ENCODE measurements at regions of chr4 and their contacts with region 1.

Region 1: DNA sequence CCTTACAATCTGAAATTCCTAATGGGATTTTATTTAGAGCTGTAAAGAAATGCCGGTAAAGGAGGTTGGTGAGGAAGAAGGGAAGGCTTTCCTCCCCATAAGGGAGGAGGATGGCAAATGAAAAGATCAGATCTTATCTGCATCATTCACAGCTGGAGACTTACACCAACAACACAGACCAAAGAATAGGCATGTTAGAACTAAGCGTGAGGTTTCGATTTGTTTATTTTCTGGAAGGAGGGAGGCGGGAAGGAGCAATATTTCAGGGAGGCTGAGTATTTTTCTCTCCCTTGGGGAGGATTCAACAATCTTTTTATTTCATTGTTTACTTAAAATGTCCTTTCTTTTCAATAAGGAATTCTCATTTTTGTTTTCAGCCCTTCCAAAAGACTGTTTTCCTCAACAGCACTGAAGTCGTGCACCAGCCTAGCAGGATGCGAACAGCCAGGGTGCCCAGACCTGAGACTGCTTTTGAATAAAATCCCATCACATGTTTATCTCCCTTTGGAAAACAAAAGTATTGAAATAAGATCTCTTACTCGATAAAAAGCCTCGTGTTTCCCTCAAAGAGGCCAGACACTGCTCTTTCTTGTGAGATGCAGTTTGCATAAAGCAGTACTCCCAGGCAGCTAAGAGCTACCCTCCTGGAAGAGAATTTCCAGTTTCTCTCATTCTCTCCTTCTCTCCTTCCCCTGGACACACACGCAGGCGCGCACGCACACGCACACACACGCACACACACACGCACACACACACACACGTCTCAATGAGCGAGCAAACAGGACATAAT is 236.1 kb downstream of the MGST2 start:
- DNase-seq: no peak
- H3K4me3 ChIP-seq: peak overlapping the region; percentile 35 to 63 (median 38)
- H3K27ac ChIP-seq: peak overlapping the region; percentile 51 to 79
- H3K4me1 ChIP-seq: no peaks in the 10 kb centered on the region
- H3K27me3 ChIP-seq: no peaks in the 10 kb centered on the region
- CTCF ChIP-seq: no peak
- POLR2A ChIP-seq: no peak

Region 2: DNA sequence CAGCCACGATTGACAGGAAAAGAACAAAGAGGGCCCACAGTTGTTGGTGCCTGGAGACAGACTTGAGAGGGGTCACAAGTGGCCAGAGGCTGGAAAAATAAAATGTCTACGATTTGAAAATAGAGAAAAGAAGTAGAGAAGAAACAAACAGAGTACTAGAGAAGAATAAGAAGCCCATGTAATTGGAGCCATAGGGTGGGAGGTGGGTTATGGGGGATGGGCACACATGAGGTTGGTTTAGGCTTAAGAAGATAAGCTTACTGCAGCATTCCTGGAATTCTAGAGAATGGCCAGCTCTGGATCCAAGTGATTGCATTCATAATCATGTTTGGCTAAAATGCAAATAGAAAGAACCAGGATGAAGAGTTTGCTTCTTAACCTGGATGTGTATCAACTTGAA is 41.6 kb after region 1 on chr4:
- intact Hi-C with region 1: no loop called
- DNase-seq: no peak
- H3K4me3 ChIP-seq: no peak overlapping the region
- H3K27ac ChIP-seq: no peak overlapping the region
- H3K4me1 ChIP-seq: no peaks in the 10 kb centered on the region
- H3K27me3 ChIP-seq: no peaks in the 10 kb centered on the region
- CTCF ChIP-seq: no peak
- POLR2A ChIP-seq: no peak

Region 3: GRCh38 chr4:139963708-139964107 is 62.0 kb after region 1 on chr4:
- intact Hi-C with region 1: no loop called
- DNase-seq: no peak
- H3K4me3 ChIP-seq: no peak overlapping the region
- H3K27ac ChIP-seq: no peak overlapping the region
- H3K4me1 ChIP-seq: peaks cover 0 to 5% of the 10 kb centered on the region in 2 donors
- H3K27me3 ChIP-seq: no peaks in the 10 kb centered on the region
- CTCF ChIP-seq: no peak
- POLR2A ChIP-seq: no peak

Region 4: GRCh38 chr4:139978692-139979091 is 77.0 kb after region 1 on chr4:
- intact Hi-C with region 1: loop called (anchors 10 kb)
- DNase-seq: no peak
- H3K4me3 ChIP-seq: no peak overlapping the region
- H3K27ac ChIP-seq: peak overlapping the region; percentile 8 to 21
- H3K4me1 ChIP-seq: peaks cover 2 to 10% of the 10 kb centered on the region in 2 donors
- H3K27me3 ChIP-seq: no peaks in the 10 kb centered on the region
- CTCF ChIP-seq: no peak
- POLR2A ChIP-seq: no peak